ENCODE measurements at regions of chr1 and their contacts with region 1.

Region 1: DNA sequence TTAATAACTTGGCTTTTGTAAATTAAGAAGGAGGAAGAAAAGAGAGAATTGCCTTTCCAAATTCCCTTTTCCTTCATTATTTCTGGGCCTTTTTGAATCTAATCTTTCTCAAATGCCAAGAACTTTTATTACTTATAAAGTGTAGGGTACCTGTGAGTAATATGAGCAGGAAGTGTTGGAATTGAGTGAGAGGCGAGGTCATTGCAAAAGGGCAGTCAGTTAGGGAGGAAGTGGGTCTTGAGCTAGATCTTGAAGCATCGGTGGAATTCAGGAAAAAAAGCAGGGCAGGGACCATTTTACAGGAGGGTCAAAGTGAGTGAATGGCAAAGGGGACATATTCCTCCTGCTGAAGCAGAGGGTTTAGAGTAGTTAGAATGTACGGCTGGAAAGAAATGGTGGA is 23.4 kb downstream of the DDI2 start:
- DNase-seq: no peak
- ATAC-seq: no peak
- H3K4me3 ChIP-seq: no peak overlapping the region
- H3K27ac ChIP-seq: no peak overlapping the region
- H3K4me1 ChIP-seq: no peaks in the 10 kb centered on the region
- H3K27me3 ChIP-seq: no peaks in the 10 kb centered on the region
- CTCF ChIP-seq: no peak
- EP300 ChIP-seq: no peak
- POLR2A ChIP-seq: no peak
- RAD21 ChIP-seq: no peak

Region 2: GRCh38 chr1:15489052-15489736 is 151.5 kb before region 1 on chr1:
- CTCF ChIA-PET with region 1: no interaction called
- POLR2A ChIA-PET with region 1: no interaction called
- RAD21 ChIA-PET with region 1: no interaction called
- SMC1A ChIA-PET with region 1: no interaction called
- in situ Hi-C with region 1: no loop called
- intact Hi-C with region 1: no loop called
- DNase-seq: no peak
- ATAC-seq: no peak
- H3K4me3 ChIP-seq: no peak overlapping the region
- H3K27ac ChIP-seq: no peak overlapping the region
- H3K4me1 ChIP-seq: no peaks in the 10 kb centered on the region
- H3K27me3 ChIP-seq: no peaks in the 10 kb centered on the region
- CTCF ChIP-seq: no peak
- EP300 ChIP-seq: no peak
- POLR2A ChIP-seq: no peak
- RAD21 ChIP-seq: no peak

Region 3: DNA sequence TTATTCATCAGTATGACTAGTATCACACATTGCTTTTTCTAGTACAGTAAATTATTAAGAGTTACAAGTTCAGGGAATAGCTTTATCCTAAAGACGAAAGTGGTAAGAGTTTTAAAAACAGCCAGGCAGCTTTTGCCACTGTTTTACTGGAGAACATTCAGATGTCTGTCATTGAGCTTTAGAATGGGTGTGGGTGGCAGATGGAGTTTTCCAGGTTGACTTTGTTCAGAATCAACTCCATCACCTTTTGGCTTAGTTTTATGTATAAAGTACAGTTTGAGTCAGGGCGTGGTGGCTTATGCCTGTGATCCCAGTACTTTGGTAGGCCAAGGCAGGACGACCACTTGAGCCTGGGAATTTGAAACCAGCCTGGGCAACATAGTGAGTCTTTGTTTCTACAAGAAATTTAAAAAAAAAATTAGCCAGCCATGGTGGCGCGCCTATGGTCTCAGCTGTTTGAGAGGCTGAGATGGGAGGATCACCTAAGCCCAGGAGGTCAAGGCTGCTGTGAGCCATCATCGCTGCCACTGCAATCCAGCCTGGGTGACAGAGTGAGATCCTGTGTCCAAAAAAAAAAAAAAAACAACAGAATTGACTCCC is 13.5 kb after region 1 on chr1:
- CTCF ChIA-PET with region 1: interaction called, 3 read pairs
- POLR2A ChIA-PET with region 1: interaction called, 3 read pairs
- RAD21 ChIA-PET with region 1: no interaction called
- SMC1A ChIA-PET with region 1: interaction called, 10 read pairs
- in situ Hi-C with region 1: no loop called
- intact Hi-C with region 1: no loop called
- DNase-seq: no peak
- ATAC-seq: no peak
- H3K4me3 ChIP-seq: no peak overlapping the region
- H3K27ac ChIP-seq: no peak overlapping the region
- H3K4me1 ChIP-seq: no peaks in the 10 kb centered on the region
- H3K27me3 ChIP-seq: no peaks in the 10 kb centered on the region
- CTCF ChIP-seq: no peak
- EP300 ChIP-seq: no peak
- POLR2A ChIP-seq: no peak
- RAD21 ChIP-seq: no peak